Activated B cell treated with CpG ODN at 0.5 μM for 24 hours (primary cell): ENCODE measurements at regions of chr7 and their contacts with region 1.

Region 1: GRCh38 chr7:129952653-129953560 is at the start of gene UBE2H:
- DNase-seq: peak; percentile 89
- ATAC-seq: peak; percentile 73
- H3K4me3 Mint-ChIP-seq: peak within 1 kb of the TSS; percentile 98
- H3K27ac Mint-ChIP-seq: peak within 1 kb of the TSS; percentile 98
- H3K4me1 Mint-ChIP-seq: peaks cover 10% of the 10 kb centered on the region
- H3K27me3 Mint-ChIP-seq: no peaks in the 10 kb centered on the region
- CTCF ChIP-seq: no peak
- total RNA-seq, gene UBE2H: 28.8 and 32.6 TPM in 2 replicates

Region 2: GRCh38 chr7:128739048-128739962 is 1213.6 kb before region 1 on chr7 and contains the start of gene CALU:
- CTCF ChIA-PET with region 1: no interaction called
- POLR2A ChIA-PET with region 1: no interaction called
- intact Hi-C with region 1: loop called (anchors 2 kb)
- DNase-seq: peak; percentile 89
- ATAC-seq: peak; percentile 96
- H3K4me3 Mint-ChIP-seq: peak within 1 kb of the TSS; percentile 97
- H3K27ac Mint-ChIP-seq: peak within 1 kb of the TSS; percentile 88
- H3K4me1 Mint-ChIP-seq: peaks cover 30% of the 10 kb centered on the region
- H3K27me3 Mint-ChIP-seq: no peaks in the 10 kb centered on the region
- CTCF ChIP-seq: no peak
- total RNA-seq, gene CALU: 14.7 and 15.4 TPM in 2 replicates

Region 3: GRCh38 chr7:129611246-129612111 is 341.4 kb before region 1 on chr7 and contains the start of gene NRF1:
- CTCF ChIA-PET with region 1: no interaction called
- POLR2A ChIA-PET with region 1: interaction called, 8 read pairs
- intact Hi-C with region 1: loop called (anchors 2 kb)
- DNase-seq: peak; percentile 95
- ATAC-seq: peak; percentile 89
- H3K4me3 Mint-ChIP-seq: peak within 1 kb of the TSS; percentile 91
- H3K27ac Mint-ChIP-seq: peak within 1 kb of the TSS; percentile 92
- H3K4me1 Mint-ChIP-seq: peaks cover 58% of the 10 kb centered on the region
- H3K27me3 Mint-ChIP-seq: no peaks in the 10 kb centered on the region
- CTCF ChIP-seq: no peak
- total RNA-seq, gene NRF1: 27.4 and 29.8 TPM in 2 replicates

Region 4: DNA sequence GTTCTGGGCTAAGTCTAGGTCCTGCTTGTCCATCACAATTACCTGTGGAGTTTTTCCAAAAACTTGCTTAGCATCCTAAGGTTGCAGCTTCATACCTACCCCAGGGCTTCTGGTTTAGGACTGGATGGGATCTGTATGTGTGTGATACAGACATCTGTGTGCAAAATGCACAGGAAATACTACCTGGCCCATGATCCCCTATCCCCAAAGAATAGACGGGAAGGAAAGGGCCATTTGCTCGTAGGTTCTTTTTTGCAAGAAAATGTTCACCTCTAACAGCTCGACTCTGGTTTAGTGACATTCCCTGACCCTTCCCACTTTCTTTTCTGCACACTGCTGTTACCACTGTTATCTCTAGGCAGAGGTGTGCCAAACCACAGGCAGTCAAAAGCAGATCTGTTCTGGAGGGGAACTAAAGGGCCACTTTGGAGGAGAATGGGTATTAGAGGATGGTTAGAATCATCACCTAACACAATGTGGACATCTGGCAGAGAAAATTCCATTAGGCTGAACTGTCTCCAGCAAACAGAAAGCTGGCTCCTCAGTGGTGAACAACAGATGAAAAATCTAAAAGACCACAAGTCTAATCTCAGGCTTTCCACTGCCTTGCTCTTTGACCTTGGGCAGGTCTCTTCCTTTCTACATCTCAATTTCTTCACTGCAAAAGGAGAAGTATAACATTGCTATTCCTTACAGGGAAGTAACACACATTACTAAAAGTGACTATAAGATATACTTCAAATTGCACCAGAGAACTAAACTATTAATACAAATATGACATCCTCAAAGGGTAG is 107.5 kb before region 1 on chr7:
- CTCF ChIA-PET with region 1: no interaction called
- POLR2A ChIA-PET with region 1: no interaction called
- intact Hi-C with region 1: no loop called
- DNase-seq: no peak
- ATAC-seq: no peak
- H3K4me3 Mint-ChIP-seq: no peak overlapping the region
- H3K27ac Mint-ChIP-seq: no peak overlapping the region
- H3K4me1 Mint-ChIP-seq: peaks cover 26% of the 10 kb centered on the region
- H3K27me3 Mint-ChIP-seq: no peaks in the 10 kb centered on the region
- CTCF ChIP-seq: no peak

Region 5: GRCh38 chr7:129859183-129859582 is 93.7 kb before region 1 on chr7:
- CTCF ChIA-PET with region 1: no interaction called
- POLR2A ChIA-PET with region 1: no interaction called
- intact Hi-C with region 1: no loop called
- DNase-seq: no peak
- ATAC-seq: peak; percentile 57
- H3K4me3 Mint-ChIP-seq: no peak overlapping the region
- H3K27ac Mint-ChIP-seq: no peak overlapping the region
- H3K4me1 Mint-ChIP-seq: peaks cover 65% of the 10 kb centered on the region
- H3K27me3 Mint-ChIP-seq: no peaks in the 10 kb centered on the region
- CTCF ChIP-seq: no peak

Region 6: DNA sequence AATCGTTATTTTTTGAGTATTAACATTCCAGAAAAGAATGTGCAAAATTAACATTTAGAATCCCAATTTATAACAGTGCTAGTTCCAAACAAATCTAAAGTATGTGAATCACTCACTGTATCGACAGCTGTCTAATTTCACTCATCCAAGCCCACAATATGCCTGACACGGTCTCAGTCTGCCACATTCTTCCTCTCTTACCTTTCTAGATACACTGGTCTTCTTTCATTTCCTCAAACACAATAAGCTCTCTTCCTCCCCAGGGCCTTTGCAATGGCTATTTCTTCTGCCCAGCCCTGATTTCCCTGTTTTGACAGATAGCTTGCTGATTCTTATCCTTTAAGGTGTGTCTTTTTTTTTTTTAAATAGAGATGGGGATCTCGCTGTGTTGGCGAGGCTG is 49.0 kb before region 1 on chr7:
- CTCF ChIA-PET with region 1: interaction called, 4 read pairs
- POLR2A ChIA-PET with region 1: interaction called, 6 read pairs
- intact Hi-C with region 1: loop called (anchors 2 kb)
- DNase-seq: no peak
- ATAC-seq: peak; percentile 97
- H3K4me3 Mint-ChIP-seq: peak overlapping the region; percentile 21
- H3K27ac Mint-ChIP-seq: peak overlapping the region; percentile 57
- H3K4me1 Mint-ChIP-seq: peaks cover 86% of the 10 kb centered on the region
- H3K27me3 Mint-ChIP-seq: no peaks in the 10 kb centered on the region
- CTCF ChIP-seq: no peak

Region 7: DNA sequence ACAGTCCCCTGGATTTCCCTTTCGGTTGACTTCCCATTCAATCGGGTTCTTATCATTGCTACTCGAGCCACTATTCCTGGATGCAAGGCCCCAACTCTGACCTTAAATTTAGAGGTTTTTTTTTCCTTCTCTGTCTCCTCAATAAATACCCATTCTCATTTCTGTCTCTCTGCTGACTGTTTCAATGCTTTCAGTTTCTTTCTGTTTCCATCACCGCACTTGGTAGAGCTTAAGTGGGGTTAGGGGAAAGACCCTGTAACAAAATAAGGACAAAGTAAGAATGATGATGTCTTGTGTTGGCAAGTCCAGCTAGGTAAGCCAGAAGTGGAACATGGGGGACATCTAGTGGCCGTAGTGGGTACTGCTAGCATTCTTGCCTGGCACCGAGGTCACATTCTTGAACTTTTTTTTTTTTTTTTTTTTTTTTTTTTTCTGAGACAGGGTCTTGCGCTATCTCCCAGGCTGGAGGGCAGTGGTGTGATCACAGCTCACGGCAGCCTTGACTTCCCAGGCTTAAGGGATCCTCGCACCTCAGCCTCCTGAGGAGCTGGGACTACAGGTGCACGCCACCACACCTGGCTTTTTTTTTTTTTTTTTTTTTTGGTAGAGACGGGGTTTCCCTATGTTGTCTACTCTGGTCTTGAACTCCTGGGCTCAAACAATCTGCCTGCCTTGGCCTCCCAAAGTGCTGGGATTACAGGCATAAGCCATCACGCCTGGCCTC is 57.9 kb after region 1 on chr7:
- CTCF ChIA-PET with region 1: interaction called, 3 read pairs
- POLR2A ChIA-PET with region 1: interaction called, 10 read pairs
- intact Hi-C with region 1: no loop called
- DNase-seq: peak; percentile 74
- ATAC-seq: peak; percentile 91
- H3K4me3 Mint-ChIP-seq: no peak overlapping the region
- H3K27ac Mint-ChIP-seq: no peak overlapping the region
- H3K4me1 Mint-ChIP-seq: peaks cover 9% of the 10 kb centered on the region
- H3K27me3 Mint-ChIP-seq: no peaks in the 10 kb centered on the region
- CTCF ChIP-seq: peak; percentile 51